HCT116 (cell line): ENCODE measurements at regions of chr7 and their contacts with region 1.

Region 1: DNA sequence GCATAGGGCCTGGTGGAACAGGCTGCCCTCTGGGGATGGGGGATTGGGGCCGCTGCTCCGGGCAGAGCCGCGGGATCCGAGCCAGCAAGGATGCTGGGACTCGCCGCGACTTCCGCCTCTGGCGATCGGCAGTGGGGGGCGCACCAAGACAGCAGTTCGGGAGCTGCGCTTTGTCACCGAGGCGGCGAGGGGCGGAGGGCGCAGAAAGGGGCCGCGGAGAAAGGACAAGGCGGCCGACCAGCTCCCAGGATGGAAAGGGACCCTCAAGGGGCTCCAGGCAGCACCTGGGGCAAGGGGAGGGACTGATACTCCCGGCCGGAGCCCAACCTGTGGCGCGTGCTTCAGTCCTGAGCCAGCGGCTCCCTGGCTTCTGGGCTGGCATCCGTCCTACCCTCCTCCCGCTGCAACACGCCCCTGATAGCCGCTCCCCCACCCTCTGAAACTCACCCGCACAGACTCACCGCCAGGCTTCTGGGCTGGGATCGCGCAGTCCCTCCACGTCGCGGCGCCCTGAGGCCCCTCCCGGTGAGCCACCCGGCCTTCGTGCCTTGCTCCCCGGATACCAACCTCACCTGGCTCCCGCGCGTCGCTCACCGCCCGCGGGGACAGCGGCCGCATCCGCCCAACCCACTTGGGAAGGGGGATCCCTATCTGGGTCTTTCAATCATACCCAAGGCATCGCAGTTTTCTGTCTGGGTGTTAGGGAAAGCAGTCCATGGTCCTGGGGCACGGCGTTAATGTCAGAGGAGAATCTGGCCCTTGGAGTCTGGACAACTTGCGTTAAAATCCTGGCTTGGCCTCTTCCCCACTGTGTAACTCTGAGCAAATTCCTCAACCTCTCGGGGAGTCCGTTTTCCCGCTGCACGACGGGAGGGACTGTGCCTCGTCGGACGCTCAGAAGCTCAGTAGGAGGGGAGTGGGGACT is 7.0 kb upstream of the EVX1 start:
- DNase-seq: peak; percentile 16
- ATAC-seq: peak; percentile 91
- H3K4me3 ChIP-seq: peak overlapping the region; percentile 57 to 66
- H3K27ac ChIP-seq: peak overlapping the region; percentile 19; the same call in 1 of the 2 replicates
- H3K4me1 ChIP-seq: peaks cover 0 to 16% of the 10 kb centered on the region in 2 experiments; a peak in 2 of 4 replicates
- H3K27me3 ChIP-seq: no peaks in the 10 kb centered on the region
- CTCF ChIP-seq: peak; percentile 48 to 73 (median 57); a peak in 5 of 6 replicates
- POLR2A ChIP-seq: peak; percentile 34
- RAD21 ChIP-seq: peak; percentile 93

Region 2: DNA sequence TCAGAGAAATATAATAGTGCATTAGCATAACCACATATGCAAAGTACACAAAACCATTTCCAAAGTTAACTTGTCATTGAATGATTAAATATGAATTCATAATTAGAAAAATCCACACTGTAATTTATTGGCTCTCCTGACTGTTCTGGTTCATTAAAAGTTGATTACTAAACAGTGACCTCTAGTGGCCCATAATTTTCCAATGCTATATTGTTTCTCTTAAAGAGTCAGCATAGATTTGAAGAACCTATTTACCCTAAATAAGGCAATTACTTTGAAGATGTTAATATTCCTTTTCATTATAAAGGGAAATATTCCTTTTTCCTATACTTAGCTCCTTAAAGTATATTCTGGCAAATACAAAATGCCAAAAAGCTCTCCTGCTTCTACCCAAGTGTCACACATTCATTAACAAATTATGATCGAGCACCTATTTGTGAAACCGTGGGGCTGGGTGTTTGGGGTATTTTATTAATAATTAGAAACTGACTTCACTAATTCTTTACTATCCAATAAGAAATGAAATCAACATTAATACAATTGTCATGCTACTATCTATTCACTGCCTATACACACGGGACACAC is 340.8 kb after region 1 on chr7:
- CTCF ChIA-PET with region 1: no interaction called
- POLR2A ChIA-PET with region 1: no interaction called
- RAD21 ChIA-PET with region 1: no interaction called
- intact Hi-C with region 1: loop called (anchors 1 kb)
- DNase-seq: peak; percentile 29
- ATAC-seq: peak; percentile 64
- H3K4me3 ChIP-seq: no peak overlapping the region
- H3K27ac ChIP-seq: no peak overlapping the region
- H3K4me1 ChIP-seq: no peaks in the 10 kb centered on the region
- H3K27me3 ChIP-seq: no peaks in the 10 kb centered on the region
- CTCF ChIP-seq: peak; percentile 37 to 75 (median 60); a peak in 4 of 6 replicates
- POLR2A ChIP-seq: no peak
- RAD21 ChIP-seq: peak; percentile 70

Region 3: GRCh38 chr7:27605689-27606269 is 370.1 kb after region 1 on chr7:
- CTCF ChIA-PET with region 1: interaction called, 9 read pairs
- POLR2A ChIA-PET with region 1: no interaction called
- RAD21 ChIA-PET with region 1: no interaction called
- intact Hi-C with region 1: loop called (anchors 1 kb)
- DNase-seq: no peak
- ATAC-seq: no peak
- H3K4me3 ChIP-seq: no peak overlapping the region
- H3K27ac ChIP-seq: no peak overlapping the region
- H3K4me1 ChIP-seq: 0 out of 4 replicates have a peak, but pooled peaks cover 0 to 3% of the 10 kb centered on the region in 2 experiments
- H3K27me3 ChIP-seq: no peaks in the 10 kb centered on the region
- CTCF ChIP-seq: peak; percentile 40 to 51 (median 48); a peak in 4 of 6 replicates
- POLR2A ChIP-seq: no peak
- RAD21 ChIP-seq: peak; percentile 48